CD8-positive, alpha-beta T cell (primary cell): ENCODE measurements at regions of chr20 and their contacts with region 1.

Region 1: GRCh38 chr20:35954200-35954906 is at the start of gene SCAND1:
- DNase-seq: peak; percentile 93 to 99 (median 96)
- ATAC-seq: peak; percentile 84
- H3K4me3 ChIP-seq: peak within 1 kb of the TSS; percentile 77 to 95
- H3K4me3 Mint-ChIP-seq: peak within 1 kb of the TSS; percentile 99
- H3K27ac ChIP-seq: peak within 1 kb of the TSS; percentile 99
- H3K27ac Mint-ChIP-seq: peak within 1 kb of the TSS; percentile 99
- H3K4me1 ChIP-seq: peaks cover 23% of the 10 kb centered on the region
- H3K4me1 Mint-ChIP-seq: peaks cover 25% of the 10 kb centered on the region
- H3K27me3 ChIP-seq: no peaks in the 10 kb centered on the region
- H3K27me3 Mint-ChIP-seq: no peaks in the 10 kb centered on the region
- CTCF ChIP-seq: peak; percentile 97
- total RNA-seq, gene SCAND1: 94.8 to 100 TPM

Region 2: GRCh38 chr20:34516247-34517113 is 1437.9 kb before region 1 on chr20 and contains the start of gene DYNLRB1:
- CTCF ChIA-PET with region 1: no interaction called
- POLR2A ChIA-PET with region 1: no interaction called
- intact Hi-C with region 1: loop called in 1 of 2 experiments (anchors 5 kb)
- DNase-seq: peak; percentile 84 to 97 (median 96)
- ATAC-seq: peak; percentile 74
- H3K4me3 ChIP-seq: peak within 1 kb of the TSS; percentile 85 to 100
- H3K4me3 Mint-ChIP-seq: peak within 1 kb of the TSS; percentile 100
- H3K27ac ChIP-seq: peak within 1 kb of the TSS; percentile 77 to 85
- H3K27ac Mint-ChIP-seq: peak within 1 kb of the TSS; percentile 98
- H3K4me1 ChIP-seq: peaks cover 24% of the 10 kb centered on the region
- H3K4me1 Mint-ChIP-seq: peaks cover 60% of the 10 kb centered on the region
- H3K27me3 ChIP-seq: no peaks in the 10 kb centered on the region
- H3K27me3 Mint-ChIP-seq: no peaks in the 10 kb centered on the region
- CTCF ChIP-seq: no peak
- total RNA-seq, gene DYNLRB1: 34.9 to 38.0 TPM

Region 3: DNA sequence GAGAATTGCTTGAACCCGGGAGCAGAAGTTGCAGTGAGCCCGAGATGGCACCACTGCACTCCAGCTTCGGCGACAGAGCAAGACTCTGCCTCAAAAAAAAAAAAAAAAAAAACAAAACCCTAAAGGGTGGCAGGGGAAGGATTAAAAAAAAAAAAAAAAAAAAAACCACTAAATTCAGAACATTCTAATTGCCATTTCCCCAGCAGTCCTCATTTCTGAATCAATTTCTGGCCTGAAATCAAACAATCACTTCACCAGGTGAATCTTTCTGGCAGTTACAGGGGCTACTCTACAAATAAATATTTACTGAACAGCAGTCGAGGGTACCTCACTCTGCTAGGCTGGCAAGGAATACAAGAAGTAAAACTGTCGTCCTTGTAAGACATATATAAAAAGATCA is 543.7 kb before region 1 on chr20:
- CTCF ChIA-PET with region 1: no interaction called
- POLR2A ChIA-PET with region 1: interaction called, 7 read pairs
- intact Hi-C with region 1: loop called (anchors 1 to 2 kb)
- DNase-seq: no peak
- ATAC-seq: no peak
- H3K4me3 ChIP-seq: no peak overlapping the region
- H3K4me3 Mint-ChIP-seq: peak overlapping the region; percentile 96
- H3K27ac ChIP-seq: no peak overlapping the region
- H3K27ac Mint-ChIP-seq: peak overlapping the region; percentile 97
- H3K4me1 ChIP-seq: peaks cover 8% of the 10 kb centered on the region
- H3K4me1 Mint-ChIP-seq: peaks cover 25% of the 10 kb centered on the region
- H3K27me3 ChIP-seq: no peaks in the 10 kb centered on the region
- H3K27me3 Mint-ChIP-seq: no peaks in the 10 kb centered on the region
- CTCF ChIP-seq: no peak

Region 4: GRCh38 chr20:35664544-35665221 is 289.7 kb before region 1 on chr20 and contains the starts of genes CPNE1 and RBM12:
- CTCF ChIA-PET with region 1: interaction called, 4 read pairs
- POLR2A ChIA-PET with region 1: interaction called, 15 read pairs
- intact Hi-C with region 1: loop called in 1 of 2 experiments (anchors 2 kb)
- DNase-seq: peak; percentile 86 to 97 (median 93)
- ATAC-seq: peak; percentile 67
- H3K4me3 ChIP-seq: peak within 1 kb of the TSS; percentile 60 to 87
- H3K4me3 Mint-ChIP-seq: peak within 1 kb of the TSS; percentile 87
- H3K27ac ChIP-seq: peak within 1 kb of the TSS; percentile 95 to 98
- H3K27ac Mint-ChIP-seq: peak within 1 kb of the TSS; percentile 98
- H3K4me1 ChIP-seq: peaks cover 29% of the 10 kb centered on the region
- H3K4me1 Mint-ChIP-seq: peaks cover 43% of the 10 kb centered on the region
- H3K27me3 ChIP-seq: no peaks in the 10 kb centered on the region
- H3K27me3 Mint-ChIP-seq: no peaks in the 10 kb centered on the region
- CTCF ChIP-seq: no peak
- total RNA-seq, gene CPNE1: 124 to 129 TPM
- total RNA-seq, gene RBM12: 97.4 to 102 TPM

Region 5: GRCh38 chr20:35821807-35822242 is 132.5 kb before region 1 on chr20:
- CTCF ChIA-PET with region 1: no interaction called
- POLR2A ChIA-PET with region 1: no interaction called
- intact Hi-C with region 1: no loop called
- DNase-seq: no peak
- ATAC-seq: no peak
- H3K4me3 ChIP-seq: no peak overlapping the region
- H3K4me3 Mint-ChIP-seq: no peak overlapping the region
- H3K27ac ChIP-seq: no peak overlapping the region
- H3K27ac Mint-ChIP-seq: peak overlapping the region; percentile 4
- H3K4me1 ChIP-seq: peaks cover 10% of the 10 kb centered on the region
- H3K4me1 Mint-ChIP-seq: peaks cover 35% of the 10 kb centered on the region
- H3K27me3 ChIP-seq: no peaks in the 10 kb centered on the region
- H3K27me3 Mint-ChIP-seq: no peaks in the 10 kb centered on the region
- CTCF ChIP-seq: no peak

Region 6: GRCh38 chr20:35907017-35907701 is 47.2 kb before region 1 on chr20:
- CTCF ChIA-PET with region 1: no interaction called
- POLR2A ChIA-PET with region 1: no interaction called
- intact Hi-C with region 1: no loop called
- DNase-seq: no peak
- ATAC-seq: no peak
- H3K4me3 ChIP-seq: no peak overlapping the region
- H3K4me3 Mint-ChIP-seq: no peak overlapping the region
- H3K27ac ChIP-seq: no peak overlapping the region
- H3K27ac Mint-ChIP-seq: no peak overlapping the region
- H3K4me1 ChIP-seq: no peaks in the 10 kb centered on the region
- H3K4me1 Mint-ChIP-seq: peaks cover 18% of the 10 kb centered on the region
- H3K27me3 ChIP-seq: no peaks in the 10 kb centered on the region
- H3K27me3 Mint-ChIP-seq: no peaks in the 10 kb centered on the region
- CTCF ChIP-seq: no peak

Region 7: GRCh38 chr20:35994994-35995453 is 40.7 kb after region 1 on chr20:
- CTCF ChIA-PET with region 1: interaction called, 10 read pairs
- POLR2A ChIA-PET with region 1: interaction called, 5 read pairs
- intact Hi-C with region 1: loop called in 1 of 2 experiments (anchors 2 kb)
- DNase-seq: peak; percentile 66 to 90 (median 83)
- ATAC-seq: peak; percentile 89
- H3K4me3 ChIP-seq: no peak overlapping the region
- H3K4me3 Mint-ChIP-seq: no peak overlapping the region
- H3K27ac ChIP-seq: no peak overlapping the region
- H3K27ac Mint-ChIP-seq: no peak overlapping the region
- H3K4me1 ChIP-seq: no peaks in the 10 kb centered on the region
- H3K4me1 Mint-ChIP-seq: peaks cover 8% of the 10 kb centered on the region
- H3K27me3 ChIP-seq: no peaks in the 10 kb centered on the region
- H3K27me3 Mint-ChIP-seq: peaks cover 4% of the 10 kb centered on the region
- CTCF ChIP-seq: peak; percentile 84

Region 8: GRCh38 chr20:36010825-36011224 is 56.5 kb after region 1 on chr20:
- CTCF ChIA-PET with region 1: no interaction called
- POLR2A ChIA-PET with region 1: no interaction called
- intact Hi-C with region 1: no loop called
- DNase-seq: no peak
- ATAC-seq: no peak
- H3K4me3 ChIP-seq: no peak overlapping the region
- H3K4me3 Mint-ChIP-seq: no peak overlapping the region
- H3K27ac ChIP-seq: no peak overlapping the region
- H3K27ac Mint-ChIP-seq: no peak overlapping the region
- H3K4me1 ChIP-seq: no peaks in the 10 kb centered on the region
- H3K4me1 Mint-ChIP-seq: no peaks in the 10 kb centered on the region
- H3K27me3 ChIP-seq: no peaks in the 10 kb centered on the region
- H3K27me3 Mint-ChIP-seq: no peaks in the 10 kb centered on the region
- CTCF ChIP-seq: no peak

Region 9: DNA sequence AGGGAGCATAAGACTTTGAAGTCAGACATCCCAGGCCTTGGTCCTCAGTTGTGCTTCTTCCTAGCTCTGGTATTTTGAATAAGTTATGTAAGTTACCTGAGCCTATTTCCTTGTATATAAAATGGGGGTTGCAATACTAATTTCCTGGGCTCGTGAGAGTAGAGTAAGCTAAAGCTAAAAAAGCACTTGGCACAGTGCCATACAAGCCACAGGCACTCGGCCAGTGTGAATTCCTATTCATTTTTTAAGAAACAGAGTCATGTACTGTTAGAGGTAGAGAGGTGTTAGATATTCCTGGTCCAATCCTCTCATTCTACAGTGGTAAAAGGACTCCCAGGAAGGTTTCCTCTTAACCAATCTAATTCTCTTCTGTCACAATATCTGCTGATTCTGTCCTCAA is 120.6 kb after region 1 on chr20:
- CTCF ChIA-PET with region 1: no interaction called
- POLR2A ChIA-PET with region 1: no interaction called
- intact Hi-C with region 1: no loop called
- DNase-seq: no peak
- ATAC-seq: no peak
- H3K4me3 ChIP-seq: no peak overlapping the region
- H3K4me3 Mint-ChIP-seq: no peak overlapping the region
- H3K27ac ChIP-seq: no peak overlapping the region
- H3K27ac Mint-ChIP-seq: no peak overlapping the region
- H3K4me1 ChIP-seq: no peaks in the 10 kb centered on the region
- H3K4me1 Mint-ChIP-seq: no peaks in the 10 kb centered on the region
- H3K27me3 ChIP-seq: no peaks in the 10 kb centered on the region
- H3K27me3 Mint-ChIP-seq: peaks cover 18% of the 10 kb centered on the region
- CTCF ChIP-seq: no peak

Region 10: DNA sequence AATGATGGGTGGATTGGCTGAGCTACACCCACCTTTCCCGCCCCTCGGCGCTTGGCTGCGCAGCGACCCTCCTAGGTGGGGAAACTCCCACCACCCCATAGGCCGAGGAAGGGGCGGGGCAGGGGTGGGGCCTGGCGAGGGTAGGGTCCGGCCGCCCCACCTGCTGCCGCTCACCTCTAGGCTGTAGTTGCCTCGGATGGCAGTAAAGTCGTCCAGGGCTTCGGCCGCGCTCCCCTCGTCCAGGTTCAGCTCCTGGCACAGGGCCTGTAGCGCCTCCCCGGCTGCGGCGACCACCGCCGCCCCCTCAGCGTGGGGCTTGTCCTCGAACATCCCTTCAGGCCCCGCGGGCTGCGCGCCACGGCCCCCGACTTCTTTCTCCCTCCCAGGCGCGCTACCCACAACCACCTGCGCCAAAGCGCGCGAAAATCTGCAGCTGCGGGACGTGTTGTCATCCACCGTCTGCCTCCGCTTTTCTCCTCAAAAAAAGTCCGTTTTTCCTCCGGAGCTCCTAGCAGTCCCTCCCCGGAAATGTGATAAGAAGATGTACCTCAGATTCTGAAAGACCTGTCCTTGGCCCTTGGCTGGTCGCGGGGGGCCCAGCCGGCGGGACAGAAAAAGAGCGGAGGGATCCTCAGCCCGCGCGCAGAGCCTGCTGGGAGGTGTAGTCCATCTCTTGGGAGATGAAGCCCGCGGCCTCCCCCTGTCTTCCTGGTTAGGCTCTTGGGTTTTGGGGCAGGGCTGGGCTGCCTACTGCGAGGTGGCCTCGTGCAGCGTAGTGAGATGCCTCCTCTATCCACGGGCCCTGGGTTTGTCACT is 1141.5 kb after region 1 on chr20 and contains the start of gene RBL1:
- CTCF ChIA-PET with region 1: no interaction called
- POLR2A ChIA-PET with region 1: no interaction called
- intact Hi-C with region 1: loop called in 1 of 2 experiments (anchors 10 kb)
- DNase-seq: peak; percentile 69 to 93 (median 85)
- ATAC-seq: peak; percentile 78
- H3K4me3 ChIP-seq: peak within 1 kb of the TSS; percentile 79 to 96
- H3K4me3 Mint-ChIP-seq: peak within 1 kb of the TSS; percentile 99
- H3K27ac ChIP-seq: peak within 1 kb of the TSS; percentile 79 to 89
- H3K27ac Mint-ChIP-seq: peak within 1 kb of the TSS; percentile 99
- H3K4me1 ChIP-seq: peaks cover 18% of the 10 kb centered on the region
- H3K4me1 Mint-ChIP-seq: peaks cover 28% of the 10 kb centered on the region
- H3K27me3 ChIP-seq: no peaks in the 10 kb centered on the region
- H3K27me3 Mint-ChIP-seq: no peaks in the 10 kb centered on the region
- CTCF ChIP-seq: no peak
- total RNA-seq, gene RBL1: 29.6 to 32.6 TPM